ENCODE measurements at regions of chr17 and their contacts with region 1.

Region 1: DNA sequence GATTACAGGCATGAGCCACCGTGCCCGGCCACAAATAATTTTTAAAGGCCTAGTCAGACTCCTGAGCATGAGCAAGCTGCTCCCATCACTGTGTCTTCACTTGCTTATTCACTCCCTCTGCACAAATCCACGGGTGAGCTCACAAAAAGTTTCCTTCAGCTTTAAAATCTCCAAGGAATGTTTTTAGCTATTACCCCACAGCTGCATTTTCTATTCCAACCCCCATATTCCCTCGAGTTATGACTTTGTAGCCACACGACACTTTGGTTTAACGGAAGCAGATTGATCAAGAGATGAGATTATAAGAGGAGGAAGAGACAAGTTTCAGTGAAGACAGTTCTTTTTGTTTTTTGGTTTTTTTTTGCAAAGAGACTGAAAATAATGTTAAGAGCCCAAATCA is 49.1 kb upstream of the SLC25A19 start:
- DNase-seq: no peak
- CTCF ChIP-seq: no peak

Region 2: GRCh38 chr17:75325827-75326225 is 12.5 kb before region 1 on chr17:
- CTCF ChIA-PET with region 1: interaction called, 53 read pairs
- POLR2A ChIA-PET with region 1: interaction called, 7 read pairs
- DNase-seq: no peak
- CTCF ChIP-seq: no peak

Measured in GM10248 (cell line).